Activated CD8-positive, alpha-beta T cell treated with anti-CD3 and anti-CD28 coated beads for 36 hours (primary cell): ENCODE measurements at regions of chr12 and their contacts with region 1.

Region 1: GRCh38 chr12:112992541-112993398 is 14.5 kb downstream of the OAS2 start:
- DNase-seq: peak; percentile 75
- ATAC-seq: peak; percentile 81
- H3K4me3 Mint-ChIP-seq: no peak overlapping the region
- H3K27ac Mint-ChIP-seq: peak overlapping the region; percentile 1
- H3K4me1 Mint-ChIP-seq: peaks cover 17% of the 10 kb centered on the region
- H3K27me3 Mint-ChIP-seq: no peaks in the 10 kb centered on the region
- CTCF ChIP-seq: peak; percentile 95

Region 2: GRCh38 chr12:112906712-112907414 is 85.9 kb before region 1 on chr12 and contains the start of gene OAS1:
- CTCF ChIA-PET with region 1: interaction called, 12 read pairs
- POLR2A ChIA-PET with region 1: interaction called, 8 read pairs
- intact Hi-C with region 1: no loop called
- DNase-seq: peak; percentile 44
- ATAC-seq: peak; percentile 89
- H3K4me3 Mint-ChIP-seq: peak within 1 kb of the TSS; percentile 94
- H3K27ac Mint-ChIP-seq: peak within 1 kb of the TSS; percentile 94
- H3K4me1 Mint-ChIP-seq: peaks cover 51% of the 10 kb centered on the region
- H3K27me3 Mint-ChIP-seq: no peaks in the 10 kb centered on the region
- CTCF ChIP-seq: no peak
- total RNA-seq, gene OAS1: 22.7 to 26.8 TPM

Region 3: DNA sequence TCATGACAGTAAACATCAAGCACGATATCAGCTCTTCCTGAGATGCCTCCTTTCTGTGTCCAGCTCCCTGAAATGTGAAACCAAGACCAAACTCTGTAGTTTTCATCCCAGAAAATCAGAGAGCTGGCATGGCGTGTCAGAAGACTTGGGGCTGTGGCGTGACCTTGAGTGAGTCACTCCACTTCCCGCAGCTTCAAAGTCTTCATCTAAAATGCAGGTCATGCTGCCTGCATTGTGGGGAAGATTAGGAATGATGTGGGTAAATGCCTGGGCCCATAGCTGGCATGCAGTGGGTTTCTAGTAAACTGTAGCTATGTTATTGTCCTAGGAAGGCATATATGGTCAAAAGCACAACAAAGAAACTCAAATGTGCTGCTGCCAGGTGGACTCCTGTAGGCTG is 14.4 kb after region 1 on chr12:
- CTCF ChIA-PET with region 1: interaction called, 22 read pairs
- POLR2A ChIA-PET with region 1: interaction called, 3 read pairs
- intact Hi-C with region 1: no loop called
- DNase-seq: no peak
- ATAC-seq: no peak
- H3K4me3 Mint-ChIP-seq: no peak overlapping the region
- H3K27ac Mint-ChIP-seq: no peak overlapping the region
- H3K4me1 Mint-ChIP-seq: no peaks in the 10 kb centered on the region
- H3K27me3 Mint-ChIP-seq: no peaks in the 10 kb centered on the region
- CTCF ChIP-seq: no peak

Region 4: DNA sequence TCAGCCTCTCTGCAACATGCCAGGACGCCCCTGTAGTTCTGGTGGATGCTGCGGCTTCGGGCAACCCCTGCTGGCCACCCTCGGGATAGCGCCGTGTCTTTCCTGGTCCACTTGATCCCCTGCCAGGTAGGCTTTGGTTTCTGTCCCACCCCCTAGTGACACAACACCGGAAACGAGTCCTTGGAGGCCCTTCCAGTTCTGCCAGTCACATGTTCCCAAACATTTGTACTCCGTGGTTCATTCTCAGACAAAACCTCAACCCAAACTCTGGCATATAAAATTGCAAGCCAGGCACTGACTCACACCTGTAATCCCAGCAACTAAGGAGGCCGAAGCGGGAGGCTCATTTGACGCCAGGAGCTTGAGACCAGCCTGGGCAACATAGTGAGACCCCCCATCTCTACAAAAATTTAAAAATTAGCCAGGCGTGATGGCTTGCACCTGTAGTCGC is 105.7 kb after region 1 on chr12:
- CTCF ChIA-PET with region 1: interaction called, 18 read pairs
- POLR2A ChIA-PET with region 1: no interaction called
- intact Hi-C with region 1: no loop called
- DNase-seq: peak; percentile 89
- ATAC-seq: peak; percentile 96
- H3K4me3 Mint-ChIP-seq: no peak overlapping the region
- H3K27ac Mint-ChIP-seq: peak overlapping the region; percentile 61
- H3K4me1 Mint-ChIP-seq: peaks cover 13% of the 10 kb centered on the region
- H3K27me3 Mint-ChIP-seq: no peaks in the 10 kb centered on the region
- CTCF ChIP-seq: peak; percentile 93

Region 5: GRCh38 chr12:113174461-113175384 is 182.0 kb after region 1 on chr12:
- CTCF ChIA-PET with region 1: interaction called, 13 read pairs
- POLR2A ChIA-PET with region 1: no interaction called
- intact Hi-C with region 1: no loop called
- DNase-seq: peak; percentile 87
- ATAC-seq: peak; percentile 95
- H3K4me3 Mint-ChIP-seq: no peak overlapping the region
- H3K27ac Mint-ChIP-seq: no peak overlapping the region
- H3K4me1 Mint-ChIP-seq: peaks cover 2% of the 10 kb centered on the region
- H3K27me3 Mint-ChIP-seq: no peaks in the 10 kb centered on the region
- CTCF ChIP-seq: peak; percentile 100